Dendritic cell treated with granulocyte-macrophage colony-stimulating factor and Interleukin-4, amounts not matched to agents 40 ng/mL and 50 ng/mL, for 4 days (primary cell): ENCODE measurements at regions of chrX and their contacts with region 1.

Region 1: GRCh38 chrX:78321809-78322208 is 5.6 kb downstream of the CYSLTR1 start:
- H3K4me3 Mint-ChIP-seq: no peak overlapping the region
- H3K27ac Mint-ChIP-seq: no peak overlapping the region
- H3K4me1 Mint-ChIP-seq: peaks cover 40% of the 10 kb centered on the region
- H3K27me3 Mint-ChIP-seq: peaks cover 3% of the 10 kb centered on the region

Region 2: DNA sequence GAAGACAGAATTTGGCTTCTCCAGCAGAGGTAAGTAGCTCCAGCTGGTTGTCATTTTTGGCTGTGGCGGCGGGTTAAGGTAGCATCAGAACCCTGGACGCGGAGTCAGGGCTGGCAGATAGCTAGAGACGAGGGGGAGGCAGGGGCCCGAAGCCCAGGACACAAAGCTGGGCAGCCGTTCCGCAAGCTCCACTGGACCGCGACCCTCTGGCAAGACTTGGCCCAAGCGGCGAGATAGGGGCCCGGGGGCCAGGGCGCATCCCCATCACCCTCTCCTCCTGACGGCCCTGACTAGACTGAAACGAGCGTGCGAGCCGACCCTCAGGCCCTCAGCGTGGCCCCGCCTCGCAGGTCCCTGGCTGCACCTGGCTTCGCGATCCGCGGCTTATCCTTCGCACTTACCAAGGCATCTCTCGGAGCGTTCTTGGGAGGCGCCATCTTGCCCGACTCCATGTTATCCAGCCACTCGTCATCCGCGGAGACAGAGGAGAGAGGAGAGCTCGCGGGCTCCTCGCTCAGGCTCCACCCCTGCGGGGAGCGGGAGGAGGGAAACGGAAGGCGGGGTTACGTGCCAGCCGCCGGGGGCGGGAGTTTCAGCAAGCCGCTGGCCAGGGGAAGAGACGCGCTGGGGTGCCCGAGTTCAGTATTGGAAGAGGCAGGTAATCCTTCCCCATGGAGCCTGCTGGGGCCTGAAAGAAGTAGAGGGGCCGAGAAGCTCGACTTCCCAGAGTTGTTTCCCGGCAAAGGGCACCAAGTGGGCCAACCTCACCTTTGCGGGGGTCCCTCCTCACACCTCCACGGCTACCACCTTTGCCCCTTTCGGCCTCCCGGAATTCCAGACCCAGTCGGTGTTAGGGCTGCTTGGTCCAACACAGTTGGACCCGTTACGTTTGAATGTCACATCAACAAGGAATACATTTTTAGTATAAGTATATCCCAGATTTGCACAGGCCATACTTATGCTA is 182.4 kb before region 1 on chrX and contains the start of gene TAF9B:
- intact Hi-C with region 1: loop called (anchors 10 kb)
- H3K4me3 Mint-ChIP-seq: peak within 1 kb of the TSS; percentile 87
- H3K27ac Mint-ChIP-seq: peak within 1 kb of the TSS; percentile 88
- H3K4me1 Mint-ChIP-seq: no peaks in the 10 kb centered on the region
- H3K27me3 Mint-ChIP-seq: no peaks in the 10 kb centered on the region

Region 3: GRCh38 chrX:78182881-78183280 is 138.9 kb before region 1 on chrX:
- intact Hi-C with region 1: no loop called
- H3K4me3 Mint-ChIP-seq: no peak overlapping the region
- H3K27ac Mint-ChIP-seq: no peak overlapping the region
- H3K4me1 Mint-ChIP-seq: no peaks in the 10 kb centered on the region
- H3K27me3 Mint-ChIP-seq: peaks cover 1% of the 10 kb centered on the region